ENCODE measurements at regions of chr18 and their contacts with region 1.

Region 1: DNA sequence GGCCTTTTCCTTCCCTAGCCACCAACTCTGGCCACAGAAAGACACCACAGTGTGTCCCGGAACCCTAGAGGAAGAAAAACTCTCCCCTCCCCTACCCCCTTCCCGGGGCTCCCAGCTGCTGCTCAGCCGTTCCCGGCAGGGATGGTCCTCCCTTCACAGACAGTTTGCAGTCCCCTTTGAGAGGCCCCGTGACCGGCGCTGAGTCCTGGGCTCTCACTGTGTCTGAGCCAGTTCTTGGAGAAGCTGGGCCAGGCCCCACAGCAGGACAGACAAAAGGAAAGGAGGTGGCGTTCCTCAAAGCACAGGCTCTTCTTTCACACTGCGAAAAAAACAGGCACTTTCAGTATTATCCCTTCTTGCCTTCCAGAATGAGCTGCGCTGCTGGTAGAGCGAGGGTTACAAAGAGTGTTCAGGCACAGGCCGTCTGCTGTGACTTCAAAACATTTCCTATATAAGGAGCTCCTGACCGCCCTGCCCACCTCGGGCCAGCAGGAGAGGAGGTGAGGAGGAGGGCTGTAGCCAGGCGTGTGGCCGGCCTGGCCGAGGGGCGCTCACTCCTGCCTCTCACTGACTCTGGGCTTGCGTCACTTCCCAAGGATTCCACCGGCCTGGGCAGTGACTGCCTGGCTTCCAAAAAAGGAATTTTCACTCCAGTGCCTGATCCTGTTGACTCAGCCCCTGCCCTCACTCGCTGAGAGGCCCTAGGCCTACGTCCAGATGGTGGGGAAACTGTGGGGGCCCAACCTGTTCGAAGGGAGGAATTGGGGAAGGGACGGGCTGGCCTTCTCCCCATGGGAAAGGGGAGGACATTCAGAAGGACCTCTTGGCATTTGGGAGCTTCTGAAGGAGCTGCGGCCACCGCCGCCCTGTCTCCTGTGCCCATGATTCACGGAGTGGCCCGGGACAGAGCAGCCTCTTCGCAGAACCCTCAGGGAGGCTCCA is 24.9 kb downstream of the CIDEA start:
- DNase-seq: no peak
- H3K4me3 Mint-ChIP-seq: no peak overlapping the region
- H3K27ac Mint-ChIP-seq: no peak overlapping the region
- H3K4me1 Mint-ChIP-seq: no peaks in the 10 kb centered on the region
- H3K27me3 Mint-ChIP-seq: peaks cover 11% of the 10 kb centered on the region
- CTCF ChIP-seq: no peak

Region 2: DNA sequence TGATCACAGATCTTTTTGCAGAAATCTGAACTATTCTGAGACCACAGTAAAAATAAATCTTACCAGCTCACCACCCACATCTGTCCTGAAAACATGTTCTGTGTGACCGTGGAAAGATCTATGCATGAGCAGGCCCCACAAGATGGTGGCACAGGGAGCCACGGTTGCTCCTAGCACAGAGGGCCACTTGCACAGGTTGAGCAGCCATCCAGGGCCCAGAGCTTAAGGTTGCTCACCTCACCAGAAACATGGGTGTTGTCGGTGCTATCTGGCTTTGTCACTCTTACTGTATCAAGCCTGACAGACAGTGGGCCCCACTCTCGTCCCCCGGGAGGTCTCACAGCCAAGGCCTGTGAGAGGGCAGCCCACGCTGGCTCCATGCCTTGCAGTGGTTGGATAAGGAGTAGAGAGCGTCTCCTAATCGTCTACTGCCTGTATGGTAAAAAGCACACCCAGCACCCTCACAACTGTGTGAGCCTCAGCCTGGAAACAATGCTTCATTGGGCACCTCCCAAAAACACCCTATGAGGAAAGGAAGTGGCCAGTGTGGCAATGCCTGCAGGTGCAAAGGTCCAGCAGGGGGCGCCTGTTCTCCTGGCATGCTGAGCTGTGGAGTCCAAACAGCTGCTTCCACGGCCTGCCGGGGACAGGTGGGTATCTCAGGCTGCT is 48.6 kb after region 1 on chr18:
- CTCF ChIA-PET with region 1: no interaction called
- intact Hi-C with region 1: loop called (anchors 1 kb)
- DNase-seq: peak; percentile 87
- H3K4me3 Mint-ChIP-seq: no peak overlapping the region
- H3K27ac Mint-ChIP-seq: no peak overlapping the region
- H3K4me1 Mint-ChIP-seq: no peaks in the 10 kb centered on the region
- H3K27me3 Mint-ChIP-seq: no peaks in the 10 kb centered on the region
- CTCF ChIP-seq: peak; percentile 93

Region 3: GRCh38 chr18:12543697-12544096 is 264.7 kb after region 1 on chr18:
- CTCF ChIA-PET with region 1: interaction called, 10 read pairs
- intact Hi-C with region 1: no loop called
- DNase-seq: no peak
- H3K4me3 Mint-ChIP-seq: no peak overlapping the region
- H3K27ac Mint-ChIP-seq: peak overlapping the region; percentile 8
- H3K4me1 Mint-ChIP-seq: peaks cover 61% of the 10 kb centered on the region
- H3K27me3 Mint-ChIP-seq: no peaks in the 10 kb centered on the region
- CTCF ChIP-seq: no peak